ENCODE measurements at regions of chr15 and their contacts with region 1.

Region 1: GRCh38 chr15:25710184-25710583 is 152.9 kb downstream of the ATP10A start:
- DNase-seq: peak in 1 of 2 donors; percentile 47
- H3K4me3 ChIP-seq: no peak overlapping the region
- H3K27ac ChIP-seq: no peak overlapping the region
- H3K4me1 ChIP-seq: no peaks in the 10 kb centered on the region
- H3K27me3 ChIP-seq: no peaks in the 10 kb centered on the region
- CTCF ChIP-seq: peak; percentile 11 to 55 (median 44)
- POLR2A ChIP-seq: no peak

Region 2: DNA sequence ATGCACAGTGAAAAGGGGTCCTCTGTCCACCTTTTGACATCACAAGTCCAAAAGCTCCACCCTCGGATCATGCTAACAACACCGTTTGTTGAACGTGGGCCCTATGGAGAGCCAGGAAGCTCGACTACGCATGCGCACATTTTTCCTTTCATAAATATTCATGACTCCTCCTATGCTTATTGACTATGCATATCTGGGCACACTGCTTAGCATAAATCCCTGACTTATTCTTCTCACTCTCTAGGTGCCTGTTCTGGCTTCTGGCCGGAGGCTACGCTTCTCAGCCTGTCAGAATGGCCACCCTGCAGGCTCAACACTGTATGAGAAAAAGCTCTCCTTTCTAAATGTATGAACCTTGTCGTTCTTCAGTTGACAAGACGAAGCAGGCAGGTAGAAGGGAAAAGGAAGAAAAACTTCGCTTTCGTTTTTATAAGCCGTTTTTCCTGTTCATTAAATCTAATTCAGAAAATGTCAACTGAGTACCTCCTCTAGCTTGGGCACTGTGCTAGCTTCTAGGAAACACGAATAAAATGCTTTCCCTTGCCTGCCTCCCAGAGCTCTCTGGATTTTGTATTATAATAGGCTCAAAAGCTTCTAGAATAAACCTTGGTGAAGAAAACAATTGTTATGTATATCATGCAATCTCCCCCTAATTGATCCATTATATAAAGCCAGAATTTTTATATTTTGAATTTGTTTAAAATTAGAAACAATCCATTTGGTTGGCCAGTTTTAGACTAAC is 54.8 kb before region 1 on chr15:
- intact Hi-C with region 1: loop called (anchors 10 kb)
- DNase-seq: no peak
- H3K4me3 ChIP-seq: no peak overlapping the region
- H3K27ac ChIP-seq: no peak overlapping the region
- H3K4me1 ChIP-seq: no peaks in the 10 kb centered on the region
- H3K27me3 ChIP-seq: no peaks in the 10 kb centered on the region
- CTCF ChIP-seq: no peak
- POLR2A ChIP-seq: no peak

Region 3: GRCh38 chr15:25775317-25775912 is 65.2 kb after region 1 on chr15:
- intact Hi-C with region 1: loop called (anchors 10 kb)
- DNase-seq: peak in 1 of 2 donors; percentile 53
- H3K4me3 ChIP-seq: no peak overlapping the region
- H3K27ac ChIP-seq: no peak overlapping the region
- H3K4me1 ChIP-seq: no peaks in the 10 kb centered on the region
- H3K27me3 ChIP-seq: no peaks in the 10 kb centered on the region
- CTCF ChIP-seq: no peak
- POLR2A ChIP-seq: no peak

Region 4: DNA sequence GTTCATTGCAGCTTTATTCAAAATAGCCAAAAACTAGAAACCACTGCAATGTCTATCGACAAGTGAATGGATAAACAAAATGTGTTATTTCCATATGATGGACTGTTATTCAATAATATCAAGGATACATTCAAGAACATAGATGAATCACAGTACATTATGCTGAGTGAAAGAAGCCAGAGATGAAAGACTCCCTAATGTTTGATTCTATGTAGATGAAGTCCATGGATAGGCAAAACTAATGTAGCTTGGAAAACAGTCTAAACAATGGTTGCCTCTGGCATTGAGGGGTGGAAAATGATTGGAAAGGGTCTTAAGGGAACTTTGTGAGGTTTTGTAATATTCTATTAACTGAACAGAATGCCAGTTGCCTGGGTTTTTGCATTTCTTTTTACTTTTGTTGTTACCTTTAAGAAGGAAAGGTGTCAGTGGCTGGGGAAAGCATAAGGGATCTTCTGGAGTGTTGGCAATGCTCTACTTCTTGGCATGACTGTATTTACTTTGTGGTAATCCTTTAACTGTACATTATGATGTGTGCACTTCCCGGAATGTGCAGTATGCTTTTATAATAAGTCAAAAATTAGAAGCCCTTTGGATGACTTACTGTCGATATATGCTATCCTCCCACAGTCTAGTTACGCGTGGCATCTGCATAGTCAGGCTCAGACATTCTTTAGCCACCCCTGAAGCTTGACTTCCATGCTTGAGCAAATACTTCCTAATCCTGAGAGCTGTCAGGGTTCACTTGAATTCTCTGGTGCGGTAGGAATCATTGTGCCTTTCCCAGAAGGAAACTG is 173.5 kb after region 1 on chr15:
- intact Hi-C with region 1: no loop called
- DNase-seq: no peak
- H3K4me3 ChIP-seq: no peak overlapping the region
- H3K27ac ChIP-seq: no peak overlapping the region
- H3K4me1 ChIP-seq: no peaks in the 10 kb centered on the region
- H3K27me3 ChIP-seq: no peaks in the 10 kb centered on the region
- CTCF ChIP-seq: no peak
- POLR2A ChIP-seq: no peak